Aorta (tissue), 5 donors: ENCODE measurements at regions of chr1 and their contacts with region 1.

Region 1: DNA sequence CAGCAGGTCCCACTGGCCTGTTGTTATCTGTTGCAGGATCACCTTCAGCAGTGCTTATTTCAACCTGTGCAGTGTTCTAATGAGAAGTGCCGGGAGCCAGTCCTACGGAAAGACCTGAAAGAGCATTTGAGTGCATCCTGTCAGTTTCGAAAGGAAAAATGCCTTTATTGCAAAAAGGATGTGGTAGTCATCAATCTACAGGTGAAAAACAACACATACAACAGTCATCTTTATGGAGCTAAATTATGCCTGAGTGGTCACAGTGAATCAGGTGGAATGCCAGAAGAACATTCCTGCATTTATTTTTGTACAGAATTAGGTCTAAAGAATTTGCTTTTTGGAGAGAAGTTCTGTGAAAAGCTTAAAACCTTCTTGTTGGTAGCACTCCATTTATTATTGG is 33.2 kb downstream of the TRAF5 start:
- DNase-seq: no peak
- ATAC-seq: no peak
- H3K4me3 ChIP-seq: no peak overlapping the region
- H3K27ac ChIP-seq: peak overlapping the region in 1 of 2 donors; percentile 38
- H3K4me1 ChIP-seq: peaks cover 0 to 5% of the 10 kb centered on the region in 2 donors
- H3K27me3 ChIP-seq: no peaks in the 10 kb centered on the region

Region 2: GRCh38 chr1:211371406-211372105 is 11.7 kb after region 1 on chr1:
- intact Hi-C with region 1: loop called in 1 of 2 experiments (anchors 1 kb)
- DNase-seq: no peak
- ATAC-seq: no peak
- H3K4me3 ChIP-seq: no peak overlapping the region
- H3K27ac ChIP-seq: no peak overlapping the region
- H3K4me1 ChIP-seq: no peaks in the 10 kb centered on the region
- H3K27me3 ChIP-seq: no peaks in the 10 kb centered on the region